SK-N-SH (cell line): ENCODE measurements at regions of chr7 and their contacts with region 1.

Region 1: GRCh38 chr7:104883718-104884452 is 130.1 kb upstream of the KMT2E start:
- DNase-seq: peak; percentile 84
- H3K4me3 ChIP-seq: no peak overlapping the region
- H3K27ac ChIP-seq: no peak overlapping the region
- H3K4me1 ChIP-seq: no peaks in the 10 kb centered on the region; a peak in 1 of 4 replicates
- H3K27me3 ChIP-seq: peaks cover 26% of the 10 kb centered on the region; the same call in 1 of the 2 replicates
- CTCF ChIP-seq: peak; percentile 99
- EP300 ChIP-seq: no peak
- RAD21 ChIP-seq: peak; percentile 84

Region 2: DNA sequence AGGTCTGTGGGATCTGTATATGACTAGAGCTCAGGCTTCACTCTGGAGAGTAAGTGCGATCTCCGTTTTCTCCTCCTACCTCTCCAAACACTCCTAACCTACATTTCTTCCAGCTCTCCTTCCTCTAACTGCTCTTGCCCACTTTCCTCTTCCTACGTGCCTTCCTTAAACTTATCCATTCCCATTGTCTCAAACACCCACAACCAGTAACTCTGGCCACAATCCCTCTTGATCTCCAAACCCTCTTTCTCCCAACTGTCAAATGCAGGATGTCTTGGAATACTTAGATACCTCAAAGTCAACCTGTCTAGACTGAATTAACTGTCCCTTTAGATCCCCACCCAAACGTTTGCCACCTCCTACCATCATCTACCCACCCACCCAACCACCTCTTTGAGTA is 83.6 kb before region 1 on chr7:
- CTCF ChIA-PET with region 1: no interaction called
- POLR2A ChIA-PET with region 1: no interaction called
- DNase-seq: no peak
- H3K4me3 ChIP-seq: no peak overlapping the region
- H3K27ac ChIP-seq: no peak overlapping the region
- H3K4me1 ChIP-seq: no peaks in the 10 kb centered on the region
- H3K27me3 ChIP-seq: peaks cover 22% of the 10 kb centered on the region; the same call in 1 of the 2 replicates
- CTCF ChIP-seq: no peak
- EP300 ChIP-seq: no peak
- RAD21 ChIP-seq: no peak

Region 3: DNA sequence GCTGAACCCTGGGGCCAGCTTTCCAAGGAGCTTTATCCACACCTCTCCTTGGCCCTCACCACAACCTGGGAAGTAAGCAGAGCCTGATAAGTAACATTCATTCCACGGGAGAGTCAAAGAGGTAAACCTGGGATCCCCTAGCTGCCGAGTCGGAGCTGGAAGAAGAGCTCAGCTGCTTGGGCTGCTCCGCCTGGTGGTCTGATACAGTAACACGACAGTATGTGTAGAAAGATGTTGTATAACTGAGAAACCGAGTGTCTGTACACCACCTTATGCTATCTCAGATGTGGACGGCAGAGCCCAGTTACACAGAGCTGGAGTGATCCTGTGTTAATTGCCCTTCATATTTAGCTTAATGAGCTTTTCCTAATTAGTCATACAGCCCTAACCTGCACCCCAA is 21.2 kb before region 1 on chr7:
- CTCF ChIA-PET with region 1: interaction called, 44 read pairs
- POLR2A ChIA-PET with region 1: no interaction called
- DNase-seq: peak; percentile 63
- H3K4me3 ChIP-seq: no peak overlapping the region
- H3K27ac ChIP-seq: no peak overlapping the region
- H3K4me1 ChIP-seq: peaks cover 0 to 4% of the 10 kb centered on the region in 2 experiments; a peak in 1 of 4 replicates
- H3K27me3 ChIP-seq: peaks cover 54% of the 10 kb centered on the region
- CTCF ChIP-seq: peak; percentile 58
- EP300 ChIP-seq: no peak
- RAD21 ChIP-seq: peak; percentile 66

Region 4: GRCh38 chr7:104873346-104873849 is 10.5 kb before region 1 on chr7:
- CTCF ChIA-PET with region 1: interaction called, 34 read pairs
- POLR2A ChIA-PET with region 1: no interaction called
- DNase-seq: no peak
- H3K4me3 ChIP-seq: no peak overlapping the region
- H3K27ac ChIP-seq: no peak overlapping the region
- H3K4me1 ChIP-seq: no peaks in the 10 kb centered on the region
- H3K27me3 ChIP-seq: peaks cover 4% of the 10 kb centered on the region; the same call in 1 of the 2 replicates
- CTCF ChIP-seq: no peak
- EP300 ChIP-seq: no peak
- RAD21 ChIP-seq: no peak

Region 5: DNA sequence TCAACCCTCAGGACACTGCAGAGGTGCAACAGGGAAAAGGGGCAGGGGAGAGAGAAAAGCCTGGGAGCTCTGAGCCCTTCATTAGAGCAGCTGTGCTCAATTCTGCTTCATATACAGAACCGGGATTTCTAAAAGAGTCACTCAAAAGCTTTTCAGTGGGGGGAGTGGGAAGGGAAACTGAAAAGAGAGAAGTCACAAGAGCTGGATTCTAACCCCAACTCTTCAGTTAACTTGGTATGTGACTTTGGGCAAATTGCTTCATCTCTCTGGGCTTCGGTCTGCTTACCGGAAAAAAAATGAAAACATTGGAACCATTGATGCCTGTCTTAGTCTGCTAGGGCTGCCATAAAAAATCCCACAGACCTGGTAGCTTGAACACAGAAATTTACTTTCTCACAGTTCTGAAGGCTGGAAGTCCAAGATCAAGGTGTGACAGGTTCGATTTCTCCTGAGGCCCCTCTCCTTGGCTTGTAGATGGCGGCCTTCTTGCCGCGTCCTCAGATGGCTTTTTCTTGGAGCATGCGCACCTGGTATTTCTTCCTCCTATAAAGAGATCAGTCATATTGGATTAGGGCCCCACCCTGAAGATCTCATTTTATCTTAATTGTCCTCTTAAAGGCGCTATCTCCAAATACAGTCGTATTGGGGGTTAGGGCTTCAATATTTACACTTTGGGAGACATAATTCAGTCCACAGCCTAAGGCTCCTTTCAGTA is 11.8 kb after region 1 on chr7:
- CTCF ChIA-PET with region 1: interaction called, 148 read pairs
- POLR2A ChIA-PET with region 1: no interaction called
- DNase-seq: no peak
- H3K4me3 ChIP-seq: no peak overlapping the region
- H3K27ac ChIP-seq: no peak overlapping the region
- H3K4me1 ChIP-seq: peaks cover 0 to 2% of the 10 kb centered on the region in 2 experiments; a peak in 2 of 4 replicates
- H3K27me3 ChIP-seq: peaks cover 41% of the 10 kb centered on the region
- CTCF ChIP-seq: no peak
- EP300 ChIP-seq: 0 out of 4 replicates have a peak, but pooled peaks of 1 of the 2 experiments have one; percentile 1
- RAD21 ChIP-seq: no peak

Region 6: DNA sequence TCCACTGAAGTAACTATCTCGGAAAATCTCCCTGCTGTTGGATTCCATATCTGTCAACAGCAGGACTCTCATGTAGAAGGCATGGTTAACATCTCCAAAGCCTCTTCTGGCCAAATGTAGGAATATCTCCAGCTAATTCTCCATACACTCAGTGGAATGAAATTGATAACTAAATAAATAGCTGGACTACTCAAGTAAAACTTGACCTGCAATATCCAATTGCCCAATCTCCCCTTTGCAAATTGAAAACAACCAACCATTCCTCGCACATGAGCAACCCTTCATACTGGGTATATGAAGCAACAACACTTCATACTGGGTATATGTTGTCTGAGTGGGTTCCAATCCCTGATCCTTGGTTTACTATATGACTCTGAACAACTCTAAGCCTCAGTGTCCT is 24.8 kb after region 1 on chr7:
- CTCF ChIA-PET with region 1: interaction called, 374 read pairs
- POLR2A ChIA-PET with region 1: no interaction called
- DNase-seq: no peak
- H3K4me3 ChIP-seq: no peak overlapping the region
- H3K27ac ChIP-seq: no peak overlapping the region
- H3K4me1 ChIP-seq: no peaks in the 10 kb centered on the region
- H3K27me3 ChIP-seq: no peaks in the 10 kb centered on the region; the same call in 1 of the 2 replicates
- CTCF ChIP-seq: no peak
- EP300 ChIP-seq: no peak
- RAD21 ChIP-seq: no peak

Region 7: DNA sequence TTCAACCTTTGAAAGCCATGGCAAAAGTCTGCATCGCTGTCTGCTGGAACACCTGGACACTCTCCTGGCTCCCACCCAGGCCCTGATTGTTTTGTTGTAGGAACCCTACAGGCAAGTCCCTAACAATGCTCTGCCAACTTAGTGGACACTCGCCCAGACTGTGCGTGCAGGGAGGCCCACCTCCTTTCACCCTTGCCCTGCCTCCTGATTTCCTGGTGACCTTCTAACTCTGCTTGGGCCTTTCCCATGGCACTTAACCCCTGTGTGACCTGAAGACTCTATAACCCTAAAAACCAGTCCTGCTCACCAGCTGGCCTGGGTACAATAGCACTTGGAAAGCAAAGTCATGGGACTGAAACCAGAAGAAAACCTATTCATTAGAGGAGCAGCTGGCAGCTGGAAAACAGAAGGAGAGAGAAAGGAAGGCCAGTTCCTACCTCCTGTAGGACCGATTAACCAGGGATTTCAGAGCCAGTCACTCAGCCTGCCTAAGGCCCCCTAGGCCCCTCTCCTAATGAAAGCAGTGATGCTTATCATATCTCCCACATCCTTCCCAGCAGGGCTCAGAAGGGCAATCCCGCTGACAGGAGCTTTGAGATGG is 47.4 kb after region 1 on chr7:
- CTCF ChIA-PET with region 1: interaction called, 374 read pairs
- POLR2A ChIA-PET with region 1: no interaction called
- DNase-seq: peak; percentile 86
- H3K4me3 ChIP-seq: no peak overlapping the region
- H3K27ac ChIP-seq: peak overlapping the region in 1 of 2 experiments; percentile 87; a peak in 2 of 4 replicates
- H3K4me1 ChIP-seq: peaks cover 0 to 7% of the 10 kb centered on the region in 2 experiments; a peak in 1 of 4 replicates
- H3K27me3 ChIP-seq: no peaks in the 10 kb centered on the region
- CTCF ChIP-seq: no peak
- EP300 ChIP-seq: peak in 1 of 2 experiments; percentile 82; a peak in 1 of 4 replicates
- RAD21 ChIP-seq: 0 out of 2 replicates have a peak, but pooled peaks have one; percentile 0